Activated CD4-positive, alpha-beta memory T cell treated with anti-CD3 and anti-CD28 coated beads, Interleukin-2, amount 10 ng/mL, durations not matched to agents 7 days and 5 days (primary cell): ENCODE measurements at regions of chr1 and their contacts with region 1.

Region 1: DNA sequence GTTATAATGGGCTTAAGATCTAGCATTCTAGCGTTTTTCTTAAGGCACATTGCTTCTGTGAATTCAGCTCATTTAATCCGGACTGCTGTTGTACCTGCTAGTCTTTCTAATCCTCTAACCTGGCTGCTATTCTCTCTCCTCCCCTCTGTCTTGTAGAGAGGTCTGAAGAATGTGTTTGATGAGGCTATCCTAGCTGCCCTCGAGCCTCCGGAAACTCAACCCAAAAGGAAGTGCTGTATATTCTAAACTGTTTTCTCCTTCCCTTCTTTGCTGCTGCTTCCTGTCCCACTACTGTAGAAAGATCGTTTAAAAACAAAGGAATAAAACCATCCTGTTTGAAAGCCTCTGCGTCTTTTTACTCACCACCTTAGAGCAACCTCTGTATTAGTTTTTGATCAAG is 37.3 kb downstream of the CDC42 start:
- DNase-seq: no peak
- H3K4me3 Mint-ChIP-seq: peak overlapping the region; percentile 63
- H3K27ac Mint-ChIP-seq: peak overlapping the region; percentile 79
- H3K4me1 Mint-ChIP-seq: peaks cover 87% of the 10 kb centered on the region
- H3K27me3 Mint-ChIP-seq: no peaks in the 10 kb centered on the region

Region 2: GRCh38 chr1:22105611-22106207 is 15.9 kb after region 1 on chr1:
- CTCF ChIA-PET with region 1: interaction called, 15 read pairs
- POLR2A ChIA-PET with region 1: interaction called, 11 read pairs
- DNase-seq: no peak
- H3K4me3 Mint-ChIP-seq: no peak overlapping the region
- H3K27ac Mint-ChIP-seq: peak overlapping the region; percentile 85
- H3K4me1 Mint-ChIP-seq: peaks cover 56% of the 10 kb centered on the region
- H3K27me3 Mint-ChIP-seq: no peaks in the 10 kb centered on the region